ENCODE measurements at regions of chr18 and their contacts with region 1.

Region 1: GRCh38 chr18:3245853-3246634 is 1.6 kb upstream of the MYL12A start:
- DNase-seq: peak; percentile 77 to 95 (median 88)

Region 2: GRCh38 chr18:3012964-3013804 is 232.9 kb before region 1 on chr18 and contains the start of gene LPIN2:
- intact Hi-C with region 1: loop called (anchors 10 kb)
- DNase-seq: peak; percentile 91 to 98 (median 97)

Region 3: GRCh38 chr18:3104190-3105054 is 141.6 kb before region 1 on chr18:
- intact Hi-C with region 1: no loop called
- DNase-seq: no peak